ENCODE measurements at regions of chr6 and their contacts with region 1.

Region 1: GRCh38 chr6:44096612-44097011 is 30.6 kb downstream of the MRPL14 start:
- DNase-seq: peak; percentile 87
- ATAC-seq: peak; percentile 90
- H3K4me3 Mint-ChIP-seq: no peak overlapping the region
- H3K27ac Mint-ChIP-seq: no peak overlapping the region
- H3K4me1 Mint-ChIP-seq: no peaks in the 10 kb centered on the region
- H3K27me3 Mint-ChIP-seq: no peaks in the 10 kb centered on the region

Region 2: GRCh38 chr6:44111434-44112417 is 15.1 kb after region 1 on chr6:
- CTCF ChIA-PET with region 1: interaction called, 15 read pairs
- POLR2A ChIA-PET with region 1: no interaction called
- intact Hi-C with region 1: no loop called
- DNase-seq: no peak
- ATAC-seq: no peak
- H3K4me3 Mint-ChIP-seq: no peak overlapping the region
- H3K27ac Mint-ChIP-seq: peak overlapping the region; percentile 1
- H3K4me1 Mint-ChIP-seq: peaks cover 6% of the 10 kb centered on the region
- H3K27me3 Mint-ChIP-seq: no peaks in the 10 kb centered on the region

Region 3: GRCh38 chr6:44116641-44117382 is 20.2 kb after region 1 on chr6:
- CTCF ChIA-PET with region 1: interaction called, 15 read pairs
- POLR2A ChIA-PET with region 1: no interaction called
- intact Hi-C with region 1: no loop called
- DNase-seq: no peak
- ATAC-seq: peak; percentile 57
- H3K4me3 Mint-ChIP-seq: no peak overlapping the region
- H3K27ac Mint-ChIP-seq: no peak overlapping the region
- H3K4me1 Mint-ChIP-seq: peaks cover 41% of the 10 kb centered on the region
- H3K27me3 Mint-ChIP-seq: no peaks in the 10 kb centered on the region

Region 4: DNA sequence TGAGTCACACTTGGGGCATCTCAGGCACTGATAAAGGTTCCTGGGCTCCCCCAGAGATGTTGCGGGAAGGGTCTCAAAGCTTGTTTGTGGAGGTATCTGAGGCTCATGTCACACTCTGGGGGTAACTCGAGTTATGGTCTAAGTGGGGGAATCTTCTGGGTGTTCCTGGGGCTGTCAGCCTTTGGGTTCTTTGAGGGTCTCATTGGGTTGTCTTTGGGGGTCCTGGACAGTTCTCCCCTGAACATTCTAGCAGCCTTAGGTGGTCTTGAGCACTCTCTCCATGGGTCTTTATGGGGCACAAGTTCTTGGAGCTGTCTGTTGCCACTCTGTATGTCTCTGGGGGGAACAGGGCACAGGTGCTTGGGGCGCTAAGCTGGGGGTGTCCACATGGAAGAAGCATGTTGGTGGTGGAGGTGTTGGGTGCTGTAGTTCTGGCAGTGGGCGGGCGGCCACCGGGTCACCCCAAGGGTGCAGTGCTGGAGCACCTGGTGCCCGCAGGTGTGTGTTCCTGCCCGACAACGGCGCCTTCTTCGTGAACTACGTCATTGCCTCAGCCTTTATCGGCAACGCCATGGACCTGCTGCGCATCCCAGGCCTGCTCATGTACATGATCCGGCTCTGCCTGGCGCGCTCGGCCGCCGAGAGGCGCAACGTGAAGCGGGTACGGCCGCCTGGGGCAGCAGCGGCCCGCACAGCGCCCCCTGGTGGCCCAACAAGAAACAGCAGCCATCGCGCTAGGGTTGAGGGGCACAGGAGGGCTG is 54.9 kb after region 1 on chr6:
- CTCF ChIA-PET with region 1: interaction called, 50 read pairs
- POLR2A ChIA-PET with region 1: interaction called, 4 read pairs
- intact Hi-C with region 1: loop called (anchors 1 kb)
- DNase-seq: peak; percentile 90
- ATAC-seq: peak; percentile 96
- H3K4me3 Mint-ChIP-seq: no peak overlapping the region
- H3K27ac Mint-ChIP-seq: no peak overlapping the region
- H3K4me1 Mint-ChIP-seq: peaks cover 5% of the 10 kb centered on the region
- H3K27me3 Mint-ChIP-seq: no peaks in the 10 kb centered on the region

Region 5: GRCh38 chr6:44237813-44238433 is 141.3 kb after region 1 on chr6:
- CTCF ChIA-PET with region 1: interaction called, 4 read pairs
- POLR2A ChIA-PET with region 1: no interaction called
- intact Hi-C with region 1: loop called (anchors 1 to 5 kb)
- DNase-seq: peak; percentile 88
- ATAC-seq: peak; percentile 78
- H3K4me3 Mint-ChIP-seq: peak overlapping the region; percentile 75
- H3K27ac Mint-ChIP-seq: peak overlapping the region; percentile 94
- H3K4me1 Mint-ChIP-seq: peaks cover 31% of the 10 kb centered on the region
- H3K27me3 Mint-ChIP-seq: no peaks in the 10 kb centered on the region

Region 6: GRCh38 chr6:44257025-44257752 is 160.6 kb after region 1 on chr6 and contains the start of gene SLC35B2:
- CTCF ChIA-PET with region 1: interaction called, 5 read pairs
- POLR2A ChIA-PET with region 1: interaction called, 3 read pairs
- intact Hi-C with region 1: loop called in 1 of 2 experiments (anchors 2 kb)
- DNase-seq: peak; percentile 81
- ATAC-seq: peak; percentile 72
- H3K4me3 Mint-ChIP-seq: peak within 1 kb of the TSS; percentile 83
- H3K27ac Mint-ChIP-seq: peak within 1 kb of the TSS; percentile 90
- H3K4me1 Mint-ChIP-seq: peaks cover 56% of the 10 kb centered on the region
- H3K27me3 Mint-ChIP-seq: no peaks in the 10 kb centered on the region
- total RNA-seq, gene SLC35B2: 14.1 TPM

Region 7: DNA sequence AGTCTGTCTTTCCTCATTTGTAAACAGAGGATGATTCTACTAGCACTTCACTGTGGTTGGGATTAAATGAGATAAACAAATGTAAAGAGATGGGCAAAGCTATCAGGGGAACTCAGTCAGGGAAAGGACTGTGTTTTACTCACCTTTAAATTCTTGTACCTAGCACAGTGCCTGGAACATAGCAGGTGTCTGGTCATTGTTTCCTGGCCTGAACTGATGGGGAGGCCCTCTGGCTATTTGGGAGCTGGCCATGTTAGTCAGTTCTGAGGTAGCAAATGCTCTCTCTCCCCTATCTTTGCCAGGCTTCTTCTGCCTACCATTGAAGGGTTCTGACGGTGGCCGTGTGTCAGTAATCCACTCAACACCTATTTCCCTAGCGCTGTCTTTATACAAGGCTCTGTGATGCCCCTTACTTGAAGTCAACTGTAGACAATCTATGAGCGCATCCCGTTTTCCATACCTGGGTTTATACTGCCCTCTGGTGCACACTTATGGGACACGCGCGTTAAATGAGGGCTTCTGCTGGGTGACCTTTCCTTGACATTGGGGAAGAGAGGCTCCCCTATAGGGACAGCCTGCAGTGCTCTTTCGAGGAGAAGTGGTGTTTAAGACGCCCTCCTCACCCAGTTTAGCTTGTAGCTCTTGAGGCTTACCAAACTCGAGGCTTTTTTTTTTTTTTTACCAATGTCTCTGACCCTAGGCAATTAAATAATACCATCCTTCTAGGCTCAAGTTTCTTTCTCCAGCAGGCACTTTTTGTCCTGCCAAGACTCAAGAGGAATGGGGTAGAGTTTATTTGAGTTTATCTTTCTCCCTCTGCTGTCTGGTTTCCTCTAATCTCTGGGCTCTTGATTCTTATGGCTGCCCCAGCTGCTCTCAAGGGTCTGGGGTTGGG is 241.9 kb after region 1 on chr6:
- CTCF ChIA-PET with region 1: interaction called, 13 read pairs
- POLR2A ChIA-PET with region 1: no interaction called
- intact Hi-C with region 1: loop called (anchors 1 kb)
- DNase-seq: peak; percentile 81
- ATAC-seq: peak; percentile 84
- H3K4me3 Mint-ChIP-seq: no peak overlapping the region
- H3K27ac Mint-ChIP-seq: no peak overlapping the region
- H3K4me1 Mint-ChIP-seq: peaks cover 5% of the 10 kb centered on the region
- H3K27me3 Mint-ChIP-seq: peaks cover 15% of the 10 kb centered on the region

Region 8: DNA sequence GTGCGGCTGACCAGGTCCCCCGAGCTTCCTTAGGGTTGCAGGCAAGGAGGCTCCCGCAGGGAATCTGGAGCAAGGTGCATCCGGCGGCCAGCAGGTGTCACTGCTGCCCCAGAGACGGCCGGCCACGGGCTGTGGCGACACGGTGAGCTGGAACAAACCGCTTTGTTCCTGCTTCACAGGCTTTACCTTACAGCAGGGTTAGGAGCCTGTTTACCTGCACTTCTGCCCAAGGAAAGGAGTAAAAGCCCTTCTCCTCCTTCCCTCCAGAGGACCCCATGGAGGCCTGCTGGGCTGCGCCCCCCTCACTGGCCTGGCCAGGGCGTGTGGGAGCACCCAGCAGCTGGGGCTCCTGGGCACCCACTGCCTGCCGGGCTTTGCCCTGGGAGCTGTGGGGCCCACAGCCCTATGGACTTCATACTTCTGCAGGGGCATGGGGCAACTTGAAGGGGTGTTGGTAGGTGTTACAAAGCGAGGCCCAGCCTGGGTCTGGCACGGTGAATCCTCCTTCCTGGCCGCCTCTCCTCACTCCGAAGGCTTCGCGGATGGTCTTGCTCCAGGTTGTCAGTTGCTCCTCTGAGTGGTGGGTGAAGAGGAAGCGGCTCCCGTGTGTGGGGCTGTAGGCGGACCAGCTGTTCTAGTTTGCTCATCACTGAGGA is 379.3 kb after region 1 on chr6:
- CTCF ChIA-PET with region 1: no interaction called
- POLR2A ChIA-PET with region 1: no interaction called
- intact Hi-C with region 1: no loop called
- DNase-seq: peak; percentile 86
- ATAC-seq: peak; percentile 94
- H3K4me3 Mint-ChIP-seq: no peak overlapping the region
- H3K27ac Mint-ChIP-seq: no peak overlapping the region
- H3K4me1 Mint-ChIP-seq: no peaks in the 10 kb centered on the region
- H3K27me3 Mint-ChIP-seq: no peaks in the 10 kb centered on the region